Calu3 (cell line): ENCODE measurements at regions of chr16 and their contacts with region 1.

Region 1: DNA sequence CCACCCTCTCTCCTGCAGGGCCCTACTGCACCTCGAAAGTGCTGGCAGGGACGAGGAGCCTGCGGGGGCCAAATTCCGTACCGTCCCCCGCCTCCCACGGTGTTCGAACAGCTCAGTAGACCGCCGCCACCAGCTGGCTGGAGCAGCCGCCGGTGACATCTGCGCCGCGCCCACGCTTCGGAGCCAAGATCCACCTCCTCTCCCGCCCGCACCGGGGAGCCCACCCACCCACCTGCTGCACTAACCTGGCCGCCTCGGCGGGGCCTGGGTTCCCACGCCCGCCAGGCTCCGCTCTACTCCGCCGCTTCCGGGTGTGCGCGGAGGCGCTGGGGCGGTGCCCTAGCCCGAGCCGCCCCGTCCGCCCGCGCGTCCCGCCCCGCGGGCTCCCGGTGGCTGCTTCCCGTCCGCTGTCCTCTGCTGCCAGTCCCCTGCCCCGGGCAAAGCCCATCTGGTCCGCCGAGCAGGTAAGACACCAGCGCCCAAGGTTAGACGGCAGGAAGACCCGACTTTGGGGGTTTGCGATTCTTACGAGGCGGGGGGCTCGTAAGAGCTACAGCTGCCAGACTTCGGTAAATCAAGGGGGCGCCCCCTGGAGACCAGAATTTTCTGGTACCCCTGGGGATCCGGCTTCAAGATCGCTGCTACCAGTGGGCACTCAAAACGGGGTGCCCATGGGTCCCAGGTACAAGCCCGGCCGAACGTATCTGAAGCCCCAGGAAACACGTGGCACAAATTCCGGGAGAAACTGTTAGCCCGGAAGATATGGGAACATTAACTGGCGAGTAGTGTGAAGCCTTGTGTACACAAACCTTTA is at the starts of genes FBXL8 and TRADD:
- DNase-seq: peak; percentile 91
- H3K4me3 Mint-ChIP-seq: peak within 1 kb of the TSS; percentile 84
- H3K27ac Mint-ChIP-seq: peak within 1 kb of the TSS; percentile 58
- H3K4me1 Mint-ChIP-seq: peaks cover 29% of the 10 kb centered on the region
- H3K27me3 Mint-ChIP-seq: no peaks in the 10 kb centered on the region
- CTCF ChIP-seq: peak; percentile 73
- total RNA-seq, gene FBXL8: 32.0 and 36.6 TPM in 2 replicates
- total RNA-seq, gene TRADD: 34.9 and 42.7 TPM in 2 replicates

Region 2: GRCh38 chr16:67109407-67110135 is 50.2 kb before region 1 on chr16 and contains the start of gene PHAF1:
- CTCF ChIA-PET with region 1: interaction called, 3 read pairs
- intact Hi-C with region 1: loop called (anchors 5 kb)
- DNase-seq: peak; percentile 99
- H3K4me3 Mint-ChIP-seq: peak within 1 kb of the TSS; percentile 91
- H3K27ac Mint-ChIP-seq: peak within 1 kb of the TSS; percentile 72
- H3K4me1 Mint-ChIP-seq: peaks cover 21% of the 10 kb centered on the region
- H3K27me3 Mint-ChIP-seq: no peaks in the 10 kb centered on the region
- CTCF ChIP-seq: no peak
- total RNA-seq, gene PHAF1: 21.4 and 21.9 TPM in 2 replicates